IMR-90 (cell line): ENCODE measurements at regions of chr2 and their contacts with region 1.

Region 1: DNA sequence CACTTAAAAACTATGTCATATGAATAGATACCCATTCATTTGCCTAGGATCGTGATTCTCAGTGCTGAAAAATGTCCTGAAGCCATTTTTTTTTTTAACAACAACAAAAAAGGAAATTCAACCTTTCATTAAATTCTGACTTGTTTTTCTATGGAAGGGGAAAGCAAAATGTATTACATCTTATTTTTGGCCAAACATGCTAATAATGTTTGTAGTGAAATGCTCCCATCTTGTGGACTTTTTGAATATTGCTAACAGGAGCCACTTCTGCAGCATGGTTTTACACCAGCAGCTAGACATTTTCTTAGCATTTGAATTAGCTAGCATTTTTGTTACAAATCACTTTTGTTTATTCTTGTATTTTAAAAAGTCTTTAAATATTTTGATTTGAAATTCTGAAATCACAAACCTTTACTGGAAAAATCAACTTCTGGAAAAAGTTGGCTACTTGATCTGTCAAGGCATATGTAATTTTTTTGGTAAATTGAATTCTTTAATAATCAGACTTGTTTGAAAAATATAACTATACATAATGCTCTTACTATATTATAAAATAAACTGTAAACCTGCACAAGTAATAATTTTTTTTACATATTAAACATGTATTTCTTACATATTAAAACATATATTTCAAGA is 75.8 kb downstream of the KIDINS220 start:
- DNase-seq: peak; percentile 60
- ATAC-seq: peak; percentile 65
- H3K4me3 ChIP-seq: no peak overlapping the region
- H3K27ac ChIP-seq: no peak overlapping the region
- H3K4me1 ChIP-seq: no peaks in the 10 kb centered on the region
- H3K27me3 ChIP-seq: no peaks in the 10 kb centered on the region
- CTCF ChIP-seq: peak; percentile 66
- POLR2A ChIP-seq: no peak
- RAD21 ChIP-seq: peak; percentile 72

Region 2: DNA sequence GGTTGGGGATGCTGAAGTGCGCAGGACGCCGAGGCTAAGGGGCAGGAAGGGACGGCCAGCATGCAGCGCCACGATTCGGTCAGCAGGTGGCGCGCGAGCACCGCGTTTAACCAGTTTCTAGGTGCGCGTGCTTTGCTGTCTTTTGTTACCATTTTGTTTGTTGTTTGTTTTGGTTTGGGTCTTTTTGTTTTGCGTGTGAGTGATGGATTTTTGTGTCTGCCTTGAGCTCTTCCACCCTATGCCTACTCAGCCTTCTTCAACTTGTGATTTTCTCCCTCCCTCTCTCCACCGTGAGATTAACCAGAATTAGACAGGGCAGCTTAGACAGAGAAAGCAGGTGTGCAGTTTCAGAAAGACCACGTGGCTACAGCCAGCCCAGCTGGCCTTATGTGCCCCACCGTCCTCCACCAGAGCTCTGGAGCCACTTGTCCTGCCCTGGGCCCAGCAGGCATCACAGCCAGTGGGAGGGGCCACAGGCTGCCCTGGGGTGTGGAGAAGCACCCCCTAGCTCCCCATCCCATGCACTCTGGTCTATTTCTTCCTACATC is 1664.2 kb before region 1 on chr2:
- CTCF ChIA-PET with region 1: no interaction called
- POLR2A ChIA-PET with region 1: no interaction called
- dilution Hi-C with region 1: no loop called
- in situ Hi-C with region 1: no loop called
- intact Hi-C with region 1: loop called (anchors 2 kb)
- DNase-seq: peak; percentile 30
- ATAC-seq: peak; percentile 99
- H3K4me3 ChIP-seq: no peak overlapping the region
- H3K27ac ChIP-seq: no peak overlapping the region
- H3K4me1 ChIP-seq: no peaks in the 10 kb centered on the region
- H3K27me3 ChIP-seq: no peaks in the 10 kb centered on the region
- CTCF ChIP-seq: peak; percentile 88
- POLR2A ChIP-seq: no peak
- RAD21 ChIP-seq: peak; percentile 89

Region 3: DNA sequence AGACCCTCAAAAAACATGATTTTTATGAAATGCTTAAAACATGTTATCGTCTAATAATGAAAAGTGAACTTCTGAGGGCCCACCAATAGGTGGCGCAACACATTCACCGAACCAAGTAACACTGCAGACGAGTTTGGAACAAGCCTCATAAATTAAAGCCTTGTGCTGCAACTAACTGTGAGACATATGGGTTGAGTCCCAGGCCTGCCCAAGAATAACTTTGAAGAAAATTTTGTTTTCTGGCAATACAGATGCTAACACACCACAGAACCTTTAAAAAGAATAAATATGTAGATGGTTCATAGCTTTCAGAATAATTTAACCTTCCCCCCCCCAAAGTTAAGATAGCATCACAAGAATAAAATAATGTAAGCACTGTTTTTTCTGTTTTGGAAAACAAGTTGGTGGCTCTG is 1558.6 kb before region 1 on chr2:
- CTCF ChIA-PET with region 1: no interaction called
- POLR2A ChIA-PET with region 1: no interaction called
- dilution Hi-C with region 1: no loop called
- in situ Hi-C with region 1: loop called (anchors 25 kb)
- intact Hi-C with region 1: loop called (anchors 5 kb)
- DNase-seq: peak; percentile 56
- ATAC-seq: peak; percentile 53; the same call in 1 of the 2 replicates
- H3K4me3 ChIP-seq: no peak overlapping the region
- H3K27ac ChIP-seq: no peak overlapping the region
- H3K4me1 ChIP-seq: no peaks in the 10 kb centered on the region
- H3K27me3 ChIP-seq: no peaks in the 10 kb centered on the region
- CTCF ChIP-seq: peak; percentile 71
- POLR2A ChIP-seq: no peak
- RAD21 ChIP-seq: peak; percentile 71

Region 4: DNA sequence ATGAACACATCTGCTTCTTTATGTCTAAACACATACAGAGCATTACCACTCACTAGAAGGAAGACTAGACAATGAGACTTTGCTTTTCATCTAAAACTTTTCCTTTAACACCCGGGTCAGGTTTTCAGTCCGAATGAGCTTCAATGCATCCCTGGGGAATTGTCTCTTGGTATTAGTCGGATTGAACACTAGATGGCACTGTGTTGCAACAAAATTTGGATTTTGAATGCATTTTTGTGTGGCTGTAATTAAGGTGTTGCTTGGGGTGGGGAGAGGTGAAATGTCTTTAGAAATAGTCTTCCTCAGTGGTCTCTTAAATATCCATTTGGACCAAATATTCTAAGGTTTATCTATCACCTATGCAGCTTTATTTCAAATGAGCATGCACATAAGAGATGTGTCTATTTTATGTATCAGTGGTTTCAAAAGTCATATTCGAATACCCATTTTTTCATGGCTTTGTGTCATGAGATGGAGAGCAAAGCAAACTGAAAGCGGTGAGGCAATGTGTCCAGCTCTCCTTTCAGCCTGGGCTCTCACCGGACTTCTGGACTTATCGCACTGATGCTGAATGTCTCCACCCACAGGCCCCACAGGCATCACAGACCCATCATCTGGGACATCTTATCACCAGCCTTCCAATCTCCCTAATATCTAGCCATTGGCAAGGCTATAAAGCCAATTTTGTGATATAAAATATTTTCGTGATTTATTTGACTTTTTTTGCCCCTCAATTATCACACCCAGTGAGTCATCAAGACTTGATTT is 1334.2 kb before region 1 on chr2:
- CTCF ChIA-PET with region 1: no interaction called
- POLR2A ChIA-PET with region 1: no interaction called
- dilution Hi-C with region 1: no loop called
- in situ Hi-C with region 1: loop called (anchors 10 kb)
- intact Hi-C with region 1: loop called (anchors 1 kb)
- DNase-seq: peak; percentile 51
- ATAC-seq: peak; percentile 75
- H3K4me3 ChIP-seq: no peak overlapping the region
- H3K27ac ChIP-seq: no peak overlapping the region
- H3K4me1 ChIP-seq: no peaks in the 10 kb centered on the region
- H3K27me3 ChIP-seq: peaks cover 15% of the 10 kb centered on the region
- CTCF ChIP-seq: peak; percentile 63
- POLR2A ChIP-seq: no peak
- RAD21 ChIP-seq: peak; percentile 77

Region 5: DNA sequence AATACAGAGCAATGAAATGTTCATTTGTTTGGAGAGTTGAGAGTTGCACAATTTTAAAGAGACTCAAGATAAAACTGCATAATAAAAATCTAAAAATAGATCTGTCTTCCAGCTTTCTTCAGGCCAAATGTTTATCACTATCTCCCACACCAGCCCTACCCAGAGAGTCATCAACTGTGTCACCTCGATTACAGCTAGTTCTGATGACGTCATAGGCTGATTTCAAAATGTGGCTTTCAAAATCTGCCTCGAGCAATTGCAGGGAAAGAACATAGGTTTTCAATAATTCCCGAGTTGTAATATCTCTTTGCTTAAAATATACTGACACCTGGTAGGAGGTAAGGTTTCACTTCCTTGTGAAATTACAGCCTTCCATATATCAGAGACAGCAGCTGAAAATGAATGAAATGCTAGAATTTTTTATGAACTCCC is 757.4 kb before region 1 on chr2:
- CTCF ChIA-PET with region 1: no interaction called
- POLR2A ChIA-PET with region 1: no interaction called
- dilution Hi-C with region 1: no loop called
- in situ Hi-C with region 1: no loop called
- intact Hi-C with region 1: loop called (anchors 10 kb)
- DNase-seq: peak; percentile 93
- ATAC-seq: peak; percentile 65
- H3K4me3 ChIP-seq: no peak overlapping the region
- H3K27ac ChIP-seq: no peak overlapping the region
- H3K4me1 ChIP-seq: peaks cover 4% of the 10 kb centered on the region; the same call in 1 of the 2 replicates
- H3K27me3 ChIP-seq: no peaks in the 10 kb centered on the region
- CTCF ChIP-seq: no peak
- POLR2A ChIP-seq: no peak
- RAD21 ChIP-seq: no peak

Region 6: DNA sequence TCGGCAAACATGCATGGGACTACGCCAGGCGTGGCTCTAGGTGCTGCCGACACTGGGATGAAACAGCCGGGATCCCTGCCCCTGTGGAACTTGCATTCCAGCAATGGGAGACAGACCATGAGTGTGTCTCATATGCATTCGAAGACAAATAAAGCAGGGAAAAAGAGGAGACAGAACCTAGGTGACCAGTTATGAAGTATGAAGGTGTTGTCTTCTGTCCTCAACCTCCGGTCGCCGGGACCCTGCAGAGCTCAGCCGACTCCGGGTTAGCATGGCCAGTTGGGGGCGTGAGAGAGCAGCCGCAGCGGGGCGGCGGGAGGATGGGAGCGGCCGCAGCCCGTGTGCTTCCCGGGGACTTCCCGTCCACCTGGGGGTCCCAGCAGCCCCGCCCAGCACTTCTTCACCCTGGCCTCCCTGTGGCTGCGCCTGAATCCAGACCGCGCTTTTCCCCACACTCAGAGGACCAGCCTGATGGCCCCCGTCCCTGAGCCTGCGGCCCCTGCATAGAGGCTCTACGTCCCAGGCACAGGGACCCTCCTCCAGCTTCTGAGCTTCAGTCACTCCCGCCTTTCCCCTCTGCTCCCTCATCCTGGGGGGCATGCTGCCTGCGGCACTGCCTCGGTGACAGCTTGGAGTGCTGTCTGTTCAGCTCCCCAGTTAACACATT is 68.4 kb before region 1 on chr2:
- CTCF ChIA-PET with region 1: interaction called, 3 read pairs
- POLR2A ChIA-PET with region 1: no interaction called
- dilution Hi-C with region 1: no loop called
- in situ Hi-C with region 1: no loop called
- intact Hi-C with region 1: loop called (anchors 1 kb)
- DNase-seq: no peak
- ATAC-seq: peak; percentile 89
- H3K4me3 ChIP-seq: no peak overlapping the region; the same call in 1 of the 2 replicates
- H3K27ac ChIP-seq: no peak overlapping the region
- H3K4me1 ChIP-seq: no peaks in the 10 kb centered on the region
- H3K27me3 ChIP-seq: peaks cover 4% of the 10 kb centered on the region; the same call in 1 of the 2 replicates
- CTCF ChIP-seq: peak; percentile 48
- POLR2A ChIP-seq: no peak
- RAD21 ChIP-seq: no peak; the same call in 1 of the 2 replicates